Calu3 (cell line): ENCODE measurements at regions of chr2 and their contacts with region 1.

Region 1: GRCh38 chr2:68251187-68251854 is 1.0 kb downstream of the PPP3R1 start:
- DNase-seq: peak; percentile 75
- H3K4me3 Mint-ChIP-seq: peak overlapping the region; percentile 85
- H3K27ac Mint-ChIP-seq: peak overlapping the region; percentile 93
- H3K4me1 Mint-ChIP-seq: peaks cover 20% of the 10 kb centered on the region
- H3K27me3 Mint-ChIP-seq: no peaks in the 10 kb centered on the region
- CTCF ChIP-seq: peak; percentile 69

Region 2: GRCh38 chr2:68157402-68158133 is 93.8 kb before region 1 on chr2 and contains the start of gene PNO1:
- CTCF ChIA-PET with region 1: no interaction called
- intact Hi-C with region 1: loop called (anchors 2 kb)
- DNase-seq: peak; percentile 95
- H3K4me3 Mint-ChIP-seq: peak within 1 kb of the TSS; percentile 98
- H3K27ac Mint-ChIP-seq: peak within 1 kb of the TSS; percentile 99
- H3K4me1 Mint-ChIP-seq: peaks cover 16% of the 10 kb centered on the region
- H3K27me3 Mint-ChIP-seq: no peaks in the 10 kb centered on the region
- CTCF ChIP-seq: no peak
- total RNA-seq, gene PNO1: 23.6 and 24.3 TPM in 2 replicates

Region 3: GRCh38 chr2:68302281-68302875 is 51.1 kb after region 1 on chr2:
- CTCF ChIA-PET with region 1: no interaction called
- intact Hi-C with region 1: no loop called
- DNase-seq: no peak
- H3K4me3 Mint-ChIP-seq: no peak overlapping the region
- H3K27ac Mint-ChIP-seq: no peak overlapping the region
- H3K4me1 Mint-ChIP-seq: no peaks in the 10 kb centered on the region
- H3K27me3 Mint-ChIP-seq: no peaks in the 10 kb centered on the region
- CTCF ChIP-seq: no peak